Stomach (tissue), 19 donors: ENCODE measurements at regions of chr21 and their contacts with region 1.

Region 1: DNA sequence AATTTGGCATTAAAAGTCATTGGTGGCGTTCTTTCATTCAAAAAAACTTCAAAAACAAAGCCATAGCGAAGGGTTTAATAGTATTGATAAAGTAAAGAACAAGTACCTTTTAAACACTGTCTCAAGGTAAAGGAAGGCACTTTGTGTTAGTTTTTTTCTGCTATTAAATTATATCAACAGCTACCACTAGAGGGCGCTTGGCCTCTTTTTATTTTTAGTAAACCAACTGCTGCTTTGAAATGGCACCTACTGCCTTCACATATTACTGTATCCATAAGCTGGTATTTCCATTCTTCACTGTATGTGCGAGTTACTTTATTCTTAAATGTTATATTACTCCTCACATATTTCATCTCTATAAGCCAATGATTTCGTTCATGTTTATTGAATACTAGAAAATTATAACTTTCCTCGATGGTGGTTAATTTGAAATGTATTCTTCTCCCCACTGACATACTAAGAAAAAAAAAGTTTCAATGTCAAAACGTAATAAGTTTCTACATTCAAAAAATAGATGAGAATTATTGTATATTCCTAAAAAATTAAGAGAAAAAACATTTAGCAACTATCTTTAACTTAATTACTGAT is 125.7 kb upstream of the CXADR start:
- DNase-seq: peak; percentile 54 to 87
- H3K4me3 ChIP-seq: no peak overlapping the region
- H3K27ac ChIP-seq: no peak overlapping the region
- H3K4me1 ChIP-seq: no peaks in the 10 kb centered on the region
- H3K27me3 ChIP-seq: no peaks in the 10 kb centered on the region
- CTCF ChIP-seq: peak in 5 of 7 experiments; percentile 48 to 86 (median 69)
- EP300 ChIP-seq: no peak
- POLR2A ChIP-seq: no peak

Region 2: GRCh38 chr21:16873176-16873575 is 513.9 kb before region 1 on chr21:
- intact Hi-C with region 1: no loop called
- DNase-seq: no peak
- H3K4me3 ChIP-seq: no peak overlapping the region
- H3K27ac ChIP-seq: no peak overlapping the region
- H3K4me1 ChIP-seq: no peaks in the 10 kb centered on the region
- H3K27me3 ChIP-seq: no peaks in the 10 kb centered on the region
- CTCF ChIP-seq: no peak
- EP300 ChIP-seq: no peak
- POLR2A ChIP-seq: no peak

Region 3: GRCh38 chr21:17580319-17580718 is 193.2 kb after region 1 on chr21:
- intact Hi-C with region 1: loop called (anchors 5 kb)
- DNase-seq: no peak
- H3K4me3 ChIP-seq: no peak overlapping the region
- H3K27ac ChIP-seq: no peak overlapping the region
- H3K4me1 ChIP-seq: peaks cover 0 to 7% (median 0%) of the 10 kb centered on the region in 4 donors
- H3K27me3 ChIP-seq: no peaks in the 10 kb centered on the region
- CTCF ChIP-seq: no peak
- EP300 ChIP-seq: no peak
- POLR2A ChIP-seq: no peak